Left ventricle myocardium inferior (tissue), 1 donor: ENCODE measurements at regions of chr19 and their contacts with region 1.

Region 1: GRCh38 chr19:43855616-43856015 is 28.5 kb downstream of the ZNF283 start:
- DNase-seq: no peak
- H3K4me3 ChIP-seq: no peak overlapping the region
- H3K27ac ChIP-seq: no peak overlapping the region
- H3K4me1 ChIP-seq: no peaks in the 10 kb centered on the region
- H3K27me3 ChIP-seq: no peaks in the 10 kb centered on the region
- CTCF ChIP-seq: no peak

Region 2: DNA sequence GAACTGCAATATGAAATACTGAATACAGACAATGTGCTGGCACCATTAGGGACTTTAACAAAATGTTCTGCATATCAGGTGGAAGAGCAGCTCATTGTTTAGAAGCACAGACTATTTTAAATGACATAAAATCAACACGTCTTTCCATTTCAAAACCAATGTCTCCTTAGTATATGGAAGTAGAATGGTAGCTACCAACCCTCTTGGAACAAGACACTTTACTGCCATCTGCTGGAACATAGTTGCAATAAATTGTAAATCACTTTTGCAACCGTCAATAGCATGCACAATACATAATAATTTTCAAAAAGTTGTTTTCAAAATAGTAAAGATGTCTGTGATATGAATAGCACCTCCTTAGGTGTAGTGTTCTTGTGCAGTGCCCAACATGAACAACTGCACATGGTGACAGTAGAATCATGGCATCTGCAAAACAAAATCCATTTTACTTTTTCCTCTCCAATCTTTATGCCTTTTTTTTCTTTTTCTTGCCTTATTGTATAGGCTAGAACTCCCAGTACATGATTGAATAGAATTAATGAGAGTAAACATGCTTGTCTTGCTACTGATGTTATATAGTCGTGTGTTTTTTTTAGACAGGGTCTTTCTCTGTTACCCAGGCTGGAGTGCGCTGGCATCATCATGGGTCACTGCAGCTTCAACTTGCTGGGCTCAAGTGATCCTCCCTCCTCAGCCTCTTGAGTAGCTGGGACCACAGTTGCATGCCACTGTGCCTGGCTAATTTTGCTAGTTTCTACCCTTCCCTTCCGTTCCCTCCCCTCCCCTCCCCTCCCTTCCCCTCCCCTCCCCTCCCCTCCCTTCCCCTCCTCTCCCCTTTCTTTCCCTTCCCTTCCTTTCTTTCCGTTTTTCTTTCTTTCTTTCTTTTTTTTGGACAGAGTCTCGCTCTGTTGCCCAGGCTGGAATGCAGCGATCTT is 45.6 kb before region 1 on chr19:
- intact Hi-C with region 1: no loop called
- DNase-seq: no peak
- H3K4me3 ChIP-seq: no peak overlapping the region
- H3K27ac ChIP-seq: no peak overlapping the region
- H3K4me1 ChIP-seq: no peaks in the 10 kb centered on the region
- H3K27me3 ChIP-seq: peaks cover 9% of the 10 kb centered on the region
- CTCF ChIP-seq: peak; percentile 64

Region 3: GRCh38 chr19:43880483-43880882 is 24.9 kb after region 1 on chr19:
- intact Hi-C with region 1: no loop called
- DNase-seq: no peak
- H3K4me3 ChIP-seq: no peak overlapping the region
- H3K27ac ChIP-seq: no peak overlapping the region
- H3K4me1 ChIP-seq: no peaks in the 10 kb centered on the region
- H3K27me3 ChIP-seq: no peaks in the 10 kb centered on the region
- CTCF ChIP-seq: no peak

Region 4: GRCh38 chr19:43923875-43924274 is 68.3 kb after region 1 on chr19:
- intact Hi-C with region 1: no loop called
- DNase-seq: no peak
- H3K4me3 ChIP-seq: no peak overlapping the region
- H3K27ac ChIP-seq: no peak overlapping the region
- H3K4me1 ChIP-seq: no peaks in the 10 kb centered on the region
- H3K27me3 ChIP-seq: no peaks in the 10 kb centered on the region
- CTCF ChIP-seq: no peak

Region 5: DNA sequence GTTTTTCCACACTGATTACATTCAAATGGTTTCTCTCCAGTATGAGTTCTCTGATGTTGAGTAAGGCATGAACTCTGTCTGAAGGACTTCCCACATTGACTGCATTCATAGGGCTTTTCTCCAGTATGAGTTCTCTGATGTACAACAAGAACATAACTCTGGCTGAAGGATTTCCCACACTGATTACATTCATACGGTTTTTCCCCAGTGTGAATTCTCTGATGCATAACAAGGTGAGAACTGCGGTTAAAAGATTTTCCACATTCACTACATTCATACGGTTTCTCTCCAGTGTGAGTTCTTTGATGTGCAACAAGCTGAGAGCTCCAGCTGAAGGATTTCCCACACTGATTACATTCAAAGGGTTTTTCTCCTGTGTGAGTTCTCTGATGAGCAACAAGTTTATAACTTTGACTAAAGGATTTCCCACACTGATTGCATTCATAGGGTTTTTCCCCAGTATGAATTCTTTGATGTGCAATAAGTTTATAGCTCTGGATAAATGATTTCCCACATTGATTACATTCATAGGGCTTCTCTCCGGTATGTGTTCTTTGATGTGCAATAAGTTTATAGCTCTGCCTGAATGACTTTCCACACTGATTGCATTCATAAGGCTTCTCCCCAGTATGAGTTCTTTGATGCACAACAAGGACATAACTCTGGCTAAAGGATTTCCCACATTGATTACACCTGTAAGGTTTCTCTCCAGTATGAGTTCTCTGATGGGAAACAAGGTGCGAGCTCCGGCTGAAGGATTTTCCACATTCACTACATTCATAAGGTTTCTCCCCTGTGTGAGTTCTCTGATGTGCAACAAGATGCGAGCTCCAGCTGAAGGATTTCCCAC is 621.2 kb after region 1 on chr19:
- intact Hi-C with region 1: loop called (anchors 10 kb)
- DNase-seq: no peak
- H3K4me3 ChIP-seq: no peak overlapping the region
- H3K27ac ChIP-seq: no peak overlapping the region
- H3K4me1 ChIP-seq: no peaks in the 10 kb centered on the region
- H3K27me3 ChIP-seq: no peaks in the 10 kb centered on the region
- CTCF ChIP-seq: no peak